ENCODE measurements at regions of chrX and their contacts with region 1.

Region 1: GRCh38 chrX:130339408-130340222 is at the start of gene SLC25A14:
- DNase-seq: peak; percentile 80
- ATAC-seq: peak; percentile 82
- H3K4me3 ChIP-seq: peak within 1 kb of the TSS; percentile 24 to 77 (median 67)
- H3K4me3 Mint-ChIP-seq: peak within 1 kb of the TSS; percentile 93
- H3K27ac ChIP-seq: peak within 1 kb of the TSS; percentile 46 to 83
- H3K27ac Mint-ChIP-seq: peak within 1 kb of the TSS; percentile 88
- H3K4me1 ChIP-seq: peaks cover 4 to 7% of the 10 kb centered on the region in 2 donors
- H3K4me1 Mint-ChIP-seq: peaks cover 16% of the 10 kb centered on the region
- H3K27me3 ChIP-seq: no peaks in the 10 kb centered on the region
- H3K27me3 Mint-ChIP-seq: no peaks in the 10 kb centered on the region
- CTCF ChIP-seq: no peak
- total RNA-seq, gene SLC25A14: 21.1 and 23.7 TPM in 2 replicates

Region 2: DNA sequence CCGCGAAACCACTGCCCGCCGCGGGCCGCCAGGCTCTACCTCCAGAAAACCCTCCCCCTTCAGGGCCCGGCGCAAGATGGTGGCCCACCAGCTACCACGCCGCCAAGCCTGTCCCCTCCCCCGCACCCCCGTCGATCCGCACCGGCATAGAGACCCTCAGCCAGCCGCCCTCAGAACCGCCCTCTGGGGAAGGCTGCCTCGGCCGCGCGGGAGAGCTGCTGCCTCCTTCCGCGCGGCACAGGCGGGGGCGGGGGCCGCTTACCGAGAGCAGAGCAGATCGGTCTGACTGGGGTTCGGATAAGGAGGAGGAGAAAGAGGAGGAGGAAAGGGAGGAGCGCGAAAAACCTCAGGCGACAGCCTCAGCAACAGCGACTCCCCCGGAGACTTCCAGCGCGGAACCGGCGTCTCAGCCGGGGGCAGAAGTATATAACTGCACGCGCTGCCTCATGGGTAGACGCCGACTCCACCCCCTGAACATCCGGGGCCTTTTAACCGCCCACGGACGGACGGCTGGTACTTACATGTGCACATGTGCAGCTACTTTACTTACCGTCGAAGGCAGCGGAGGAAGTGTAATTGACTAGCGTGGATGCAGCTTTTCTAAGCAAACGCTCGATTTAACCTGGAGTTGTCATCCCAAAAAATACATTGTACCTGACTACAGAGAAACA is 71.0 kb before region 1 on chrX and contains the start of gene ZNF280C:
- CTCF ChIA-PET with region 1: no interaction called
- POLR2A ChIA-PET with region 1: no interaction called
- intact Hi-C with region 1: loop called (anchors 1 kb)
- DNase-seq: peak; percentile 92
- ATAC-seq: peak; percentile 93
- H3K4me3 ChIP-seq: peak within 1 kb of the TSS; percentile 63 to 78 (median 66)
- H3K4me3 Mint-ChIP-seq: peak within 1 kb of the TSS; percentile 89
- H3K27ac ChIP-seq: peak within 1 kb of the TSS; percentile 56 to 69
- H3K27ac Mint-ChIP-seq: peak within 1 kb of the TSS; percentile 92
- H3K4me1 ChIP-seq: peaks cover 4 to 12% of the 10 kb centered on the region in 2 donors
- H3K4me1 Mint-ChIP-seq: peaks cover 12% of the 10 kb centered on the region
- H3K27me3 ChIP-seq: no peaks in the 10 kb centered on the region
- H3K27me3 Mint-ChIP-seq: no peaks in the 10 kb centered on the region
- CTCF ChIP-seq: peak; percentile 23
- total RNA-seq, gene ZNF280C: 7.0 and 7.1 TPM in 2 replicates

Region 3: DNA sequence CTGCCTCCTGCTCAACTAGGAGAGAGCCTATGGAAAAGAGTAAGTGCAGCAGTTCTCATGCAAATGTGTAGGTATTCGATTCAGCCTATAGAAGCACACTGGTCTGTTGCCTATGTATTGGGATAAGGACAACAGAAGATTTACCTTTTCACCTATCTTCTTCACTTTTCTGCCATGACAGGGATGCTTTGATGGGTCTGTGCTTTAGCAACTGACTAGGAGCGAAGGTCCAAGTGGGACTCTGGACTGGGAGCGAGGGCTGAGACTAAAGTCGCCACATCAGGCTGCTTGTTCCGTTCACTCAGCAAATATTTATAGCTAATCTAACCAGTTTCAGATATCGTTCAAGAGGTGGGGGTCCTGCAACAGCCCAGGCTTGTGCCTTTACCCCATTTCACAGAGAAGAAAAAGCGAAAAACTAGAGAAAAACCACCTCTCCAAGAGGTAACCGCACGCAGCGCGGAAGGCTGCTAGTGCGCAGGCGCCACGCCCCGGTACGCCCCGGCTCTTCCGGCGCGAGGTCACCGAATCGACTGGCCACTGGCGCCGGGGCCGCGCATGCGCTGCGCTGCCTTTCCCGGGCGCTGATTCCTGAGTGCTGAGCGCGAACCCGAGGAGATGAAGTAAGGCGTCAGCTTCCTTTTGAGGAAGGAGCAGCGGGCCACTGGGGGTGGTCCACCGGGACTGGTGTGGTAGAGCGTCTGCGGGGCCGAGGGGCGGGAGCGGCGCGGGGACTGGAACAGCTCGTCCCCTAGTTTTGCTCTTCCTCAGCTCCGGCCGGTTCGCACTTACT is 62.0 kb after region 1 on chrX and contains the start of gene RBMX2:
- CTCF ChIA-PET with region 1: no interaction called
- POLR2A ChIA-PET with region 1: no interaction called
- intact Hi-C with region 1: loop called (anchors 1 kb)
- DNase-seq: peak; percentile 78
- ATAC-seq: peak; percentile 82
- H3K4me3 ChIP-seq: peak within 1 kb of the TSS; percentile 73 to 81 (median 73)
- H3K4me3 Mint-ChIP-seq: peak within 1 kb of the TSS; percentile 95
- H3K27ac ChIP-seq: peak within 1 kb of the TSS; percentile 67 to 87
- H3K27ac Mint-ChIP-seq: peak within 1 kb of the TSS; percentile 90
- H3K4me1 ChIP-seq: peaks cover 9 to 11% of the 10 kb centered on the region in 2 donors
- H3K4me1 Mint-ChIP-seq: peaks cover 26% of the 10 kb centered on the region
- H3K27me3 ChIP-seq: peaks cover 0 to 9% (median 0%) of the 10 kb centered on the region in 4 experiments
- H3K27me3 Mint-ChIP-seq: peaks cover 21% of the 10 kb centered on the region
- CTCF ChIP-seq: no peak
- total RNA-seq, gene RBMX2: 25.2 TPM in 2 replicates

Region 4: GRCh38 chrX:130902783-130903613 is 563.4 kb after region 1 on chrX and contains the start of gene ENOX2:
- CTCF ChIA-PET with region 1: no interaction called
- POLR2A ChIA-PET with region 1: no interaction called
- intact Hi-C with region 1: loop called (anchors 1 kb)
- DNase-seq: peak; percentile 89
- ATAC-seq: peak; percentile 94
- H3K4me3 ChIP-seq: peak within 1 kb of the TSS; percentile 21 to 87 (median 80)
- H3K4me3 Mint-ChIP-seq: no peak within 1 kb of the TSS
- H3K27ac ChIP-seq: peak within 1 kb of the TSS; percentile 69 to 80
- H3K27ac Mint-ChIP-seq: peak within 1 kb of the TSS; percentile 67
- H3K4me1 ChIP-seq: peaks cover 0 to 8% of the 10 kb centered on the region in 2 donors
- H3K4me1 Mint-ChIP-seq: peaks cover 11% of the 10 kb centered on the region
- H3K27me3 ChIP-seq: no peaks in the 10 kb centered on the region
- H3K27me3 Mint-ChIP-seq: peaks cover 4% of the 10 kb centered on the region
- CTCF ChIP-seq: no peak
- total RNA-seq, gene ENOX2: 18.8 and 21.8 TPM in 2 replicates